GM12878 (cell line): ENCODE measurements at regions of chr7 and their contacts with region 1.

Region 1: GRCh38 chr7:24812310-24812945 is 55.2 kb upstream of the GSDME start:
- DNase-seq: no peak
- ATAC-seq: peak; percentile 97
- H3K4me3 ChIP-seq: no peak overlapping the region
- H3K27ac ChIP-seq: no peak overlapping the region
- H3K4me1 ChIP-seq: no peaks in the 10 kb centered on the region
- H3K27me3 ChIP-seq: no peaks in the 10 kb centered on the region
- CTCF ChIP-seq: peak; percentile 78 to 81 (median 81)
- EP300 ChIP-seq: no peak
- POLR2A ChIP-seq: no peak
- RAD21 ChIP-seq: peak; percentile 78

Region 2: DNA sequence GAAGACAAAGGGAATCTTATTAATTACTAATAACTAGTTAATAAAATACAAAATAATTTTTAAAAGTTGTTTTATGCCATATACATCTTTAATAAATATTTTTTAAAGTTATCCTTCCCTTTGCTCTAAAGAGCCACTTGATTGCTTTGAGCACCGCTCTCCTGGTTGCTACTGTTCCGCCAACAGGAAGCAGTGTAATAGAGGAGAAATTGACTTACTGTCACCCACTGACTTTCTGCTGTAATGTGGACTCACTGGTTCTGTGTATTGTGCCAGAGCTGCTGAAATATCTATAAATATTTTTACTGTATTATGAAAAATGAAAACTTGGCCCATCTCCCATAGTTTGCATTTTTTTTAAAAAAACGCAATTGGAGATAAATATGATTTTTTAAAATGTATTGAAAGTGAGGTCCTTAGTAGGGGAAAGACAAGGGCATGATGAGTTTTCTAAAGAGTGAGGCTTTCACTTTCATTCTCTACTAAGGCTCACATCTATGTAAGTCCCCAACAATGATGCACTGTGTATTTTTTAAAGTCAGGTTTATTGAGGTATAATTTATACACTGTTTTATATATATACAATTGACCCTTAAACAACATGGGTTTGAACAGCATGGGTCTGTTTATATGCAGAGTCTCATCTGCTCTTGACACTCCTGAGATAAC is 427.9 kb before region 1 on chr7:
- CTCF ChIA-PET with region 1: no interaction called
- POLR2A ChIA-PET with region 1: no interaction called
- RAD21 ChIA-PET with region 1: no interaction called
- SMC1A ChIA-PET with region 1: no interaction called
- in situ Hi-C with region 1: no loop called
- intact Hi-C with region 1: no loop called
- DNase-seq: no peak
- ATAC-seq: peak; percentile 79
- H3K4me3 ChIP-seq: no peak overlapping the region
- H3K27ac ChIP-seq: no peak overlapping the region
- H3K4me1 ChIP-seq: no peaks in the 10 kb centered on the region
- H3K27me3 ChIP-seq: no peaks in the 10 kb centered on the region
- CTCF ChIP-seq: no peak
- EP300 ChIP-seq: no peak
- POLR2A ChIP-seq: no peak
- RAD21 ChIP-seq: no peak

Region 3: GRCh38 chr7:24778543-24779282 is 33.7 kb before region 1 on chr7:
- CTCF ChIA-PET with region 1: interaction called, 13 read pairs
- POLR2A ChIA-PET with region 1: no interaction called
- RAD21 ChIA-PET with region 1: no interaction called
- SMC1A ChIA-PET with region 1: no interaction called
- in situ Hi-C with region 1: no loop called
- intact Hi-C with region 1: no loop called
- DNase-seq: no peak
- ATAC-seq: peak; percentile 59
- H3K4me3 ChIP-seq: no peak overlapping the region
- H3K27ac ChIP-seq: peak overlapping the region; percentile 64
- H3K4me1 ChIP-seq: peaks cover 33% of the 10 kb centered on the region
- H3K27me3 ChIP-seq: no peaks in the 10 kb centered on the region
- CTCF ChIP-seq: no peak
- EP300 ChIP-seq: no peak
- POLR2A ChIP-seq: peak; percentile 26; the same call in 1 of the 2 replicates
- RAD21 ChIP-seq: no peak

Region 4: GRCh38 chr7:24825931-24826661 is 13.7 kb after region 1 on chr7:
- CTCF ChIA-PET with region 1: interaction called, 44 read pairs
- POLR2A ChIA-PET with region 1: no interaction called
- RAD21 ChIA-PET with region 1: interaction called, 15 read pairs
- SMC1A ChIA-PET with region 1: interaction called, 24 read pairs
- in situ Hi-C with region 1: no loop called
- intact Hi-C with region 1: no loop called
- DNase-seq: no peak
- ATAC-seq: no peak
- H3K4me3 ChIP-seq: no peak overlapping the region
- H3K27ac ChIP-seq: no peak overlapping the region
- H3K4me1 ChIP-seq: peaks cover 9% of the 10 kb centered on the region
- H3K27me3 ChIP-seq: no peaks in the 10 kb centered on the region
- CTCF ChIP-seq: no peak
- EP300 ChIP-seq: no peak
- POLR2A ChIP-seq: no peak
- RAD21 ChIP-seq: no peak

Region 5: GRCh38 chr7:24896031-24896501 is 83.6 kb after region 1 on chr7:
- CTCF ChIA-PET with region 1: interaction called, 11 read pairs
- POLR2A ChIA-PET with region 1: no interaction called
- RAD21 ChIA-PET with region 1: interaction called, 3 read pairs
- SMC1A ChIA-PET with region 1: interaction called, 4 read pairs
- in situ Hi-C with region 1: no loop called
- intact Hi-C with region 1: no loop called
- DNase-seq: peak; percentile 52
- ATAC-seq: peak; percentile 70
- H3K4me3 ChIP-seq: no peak overlapping the region
- H3K27ac ChIP-seq: peak overlapping the region; percentile 75
- H3K4me1 ChIP-seq: peaks cover 57% of the 10 kb centered on the region
- H3K27me3 ChIP-seq: no peaks in the 10 kb centered on the region
- CTCF ChIP-seq: peak in 1 of 3 experiments; percentile 45; a peak in 2 of 6 replicates
- EP300 ChIP-seq: peak; percentile 55 to 79; a peak in 3 of 4 replicates
- POLR2A ChIP-seq: no peak
- RAD21 ChIP-seq: peak; percentile 40; the same call in 1 of the 2 replicates

Region 6: DNA sequence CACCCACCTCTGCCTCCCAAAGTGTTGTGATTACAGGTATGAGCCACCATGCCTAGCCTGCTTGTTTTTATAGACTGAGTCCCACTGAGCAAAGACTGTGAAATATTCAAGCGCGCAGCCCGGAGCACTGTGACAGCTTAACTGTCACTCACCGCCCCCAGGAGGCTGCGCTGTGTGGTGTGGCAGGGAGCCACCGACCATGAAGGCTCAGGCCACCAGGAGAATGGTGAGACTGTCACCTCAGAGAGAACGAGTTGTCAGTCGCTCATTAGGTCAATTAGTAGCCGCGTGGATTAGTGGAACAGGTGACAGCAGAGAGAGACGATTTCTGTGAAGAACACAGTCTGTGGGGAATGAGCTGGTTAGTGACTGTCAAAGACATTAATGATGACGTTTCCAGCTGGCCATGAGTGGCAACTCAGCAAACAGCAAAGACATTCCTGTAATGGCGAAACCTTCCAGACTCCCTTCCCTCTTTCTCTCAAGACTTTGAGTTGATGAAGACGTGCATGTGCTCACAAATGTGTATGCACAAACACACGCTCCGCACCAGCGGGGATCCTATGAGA is 248.1 kb after region 1 on chr7:
- CTCF ChIA-PET with region 1: interaction called, 15 read pairs
- POLR2A ChIA-PET with region 1: no interaction called
- RAD21 ChIA-PET with region 1: interaction called, 5 read pairs
- SMC1A ChIA-PET with region 1: no interaction called
- in situ Hi-C with region 1: no loop called
- intact Hi-C with region 1: no loop called
- DNase-seq: no peak
- ATAC-seq: no peak
- H3K4me3 ChIP-seq: no peak overlapping the region
- H3K27ac ChIP-seq: no peak overlapping the region
- H3K4me1 ChIP-seq: no peaks in the 10 kb centered on the region
- H3K27me3 ChIP-seq: no peaks in the 10 kb centered on the region; a peak in 1 of 4 replicates
- CTCF ChIP-seq: no peak
- EP300 ChIP-seq: no peak
- POLR2A ChIP-seq: no peak
- RAD21 ChIP-seq: no peak

Region 7: DNA sequence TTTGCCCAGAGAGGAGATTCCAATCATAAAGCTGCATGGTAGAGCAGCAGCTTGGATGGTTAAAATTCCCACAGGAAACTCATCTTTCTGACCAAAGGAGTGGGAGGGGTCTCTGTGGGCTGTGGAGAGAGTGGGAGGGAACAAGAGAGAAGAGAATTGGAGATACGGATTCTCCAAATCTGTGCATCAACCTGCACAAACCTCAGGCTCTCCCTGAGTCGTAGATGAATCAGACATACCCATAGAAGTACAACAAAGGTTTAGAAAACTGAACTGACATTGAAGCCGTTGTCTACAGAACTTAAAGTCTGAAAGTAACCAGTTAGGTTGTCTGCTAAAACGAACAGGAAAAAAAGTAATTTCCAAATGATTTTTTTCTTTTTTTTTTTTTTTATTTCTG is 270.8 kb after region 1 on chr7:
- CTCF ChIA-PET with region 1: interaction called, 290 read pairs
- POLR2A ChIA-PET with region 1: no interaction called
- RAD21 ChIA-PET with region 1: interaction called, 7 read pairs
- SMC1A ChIA-PET with region 1: interaction called, 5 read pairs
- in situ Hi-C with region 1: no loop called
- intact Hi-C with region 1: no loop called
- DNase-seq: no peak
- ATAC-seq: no peak
- H3K4me3 ChIP-seq: no peak overlapping the region
- H3K27ac ChIP-seq: no peak overlapping the region
- H3K4me1 ChIP-seq: peaks cover 10% of the 10 kb centered on the region; the same call in 1 of the 2 replicates
- H3K27me3 ChIP-seq: no peaks in the 10 kb centered on the region
- CTCF ChIP-seq: no peak
- EP300 ChIP-seq: no peak
- POLR2A ChIP-seq: no peak
- RAD21 ChIP-seq: no peak